Psoas muscle (tissue), 8 donors: ENCODE measurements at regions of chr2 and their contacts with region 1.

Region 1: DNA sequence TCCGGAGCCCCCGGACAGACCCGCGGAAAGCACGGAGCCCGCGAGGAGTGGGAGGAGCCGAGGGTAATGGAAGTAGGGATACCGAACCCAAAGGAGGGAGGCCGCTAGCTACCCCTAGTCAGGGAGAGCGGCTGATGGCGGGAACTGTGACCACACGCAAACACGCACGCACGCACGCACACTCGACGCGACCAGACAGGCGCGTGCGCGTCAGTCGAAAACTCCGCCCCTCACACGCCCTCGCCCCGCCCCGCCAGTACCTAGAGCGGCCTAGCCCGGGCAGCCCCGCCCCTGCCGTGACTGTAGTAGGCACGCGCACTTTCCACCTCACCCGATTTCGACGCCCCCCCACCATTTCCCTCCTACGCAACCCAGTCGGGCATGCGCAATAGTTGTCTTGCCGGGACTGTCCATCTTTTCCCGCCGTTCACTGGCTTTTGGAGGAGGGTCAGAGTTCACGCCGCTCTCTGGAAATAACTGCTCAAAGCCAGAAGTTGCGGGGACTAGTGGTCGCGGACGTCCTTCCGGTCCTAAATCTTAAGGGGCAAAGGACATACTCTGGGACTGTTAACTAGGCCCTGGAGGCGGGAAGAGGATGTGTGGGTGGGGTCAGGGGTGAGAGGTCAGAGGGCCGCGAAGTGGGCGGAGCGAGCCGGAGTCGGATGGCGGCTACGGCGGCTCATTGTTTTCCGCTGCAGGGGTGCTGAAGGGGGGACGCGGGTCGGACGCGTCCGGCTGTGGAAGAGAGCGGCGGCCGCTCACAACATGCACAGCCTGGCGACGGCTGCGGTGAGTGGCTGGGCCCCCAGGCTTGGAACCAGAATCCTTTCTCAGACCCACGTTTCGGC is at the starts of genes CNOT9 and USP37:
- DNase-seq: peak; percentile 100
- ATAC-seq: peak; percentile 94 to 97 (median 95)
- H3K4me3 ChIP-seq: peak within 1 kb of the TSS; percentile 76
- H3K27ac ChIP-seq: peak within 1 kb of the TSS; percentile 92
- H3K4me1 ChIP-seq: peaks cover 33% of the 10 kb centered on the region
- H3K27me3 ChIP-seq: no peaks in the 10 kb centered on the region
- CTCF ChIP-seq: no peak
- total RNA-seq, gene CNOT9: 15.9 to 22.9 (median 17.2) TPM
- total RNA-seq, gene USP37: 5.9 to 10.0 (median 7.2) TPM

Region 2: DNA sequence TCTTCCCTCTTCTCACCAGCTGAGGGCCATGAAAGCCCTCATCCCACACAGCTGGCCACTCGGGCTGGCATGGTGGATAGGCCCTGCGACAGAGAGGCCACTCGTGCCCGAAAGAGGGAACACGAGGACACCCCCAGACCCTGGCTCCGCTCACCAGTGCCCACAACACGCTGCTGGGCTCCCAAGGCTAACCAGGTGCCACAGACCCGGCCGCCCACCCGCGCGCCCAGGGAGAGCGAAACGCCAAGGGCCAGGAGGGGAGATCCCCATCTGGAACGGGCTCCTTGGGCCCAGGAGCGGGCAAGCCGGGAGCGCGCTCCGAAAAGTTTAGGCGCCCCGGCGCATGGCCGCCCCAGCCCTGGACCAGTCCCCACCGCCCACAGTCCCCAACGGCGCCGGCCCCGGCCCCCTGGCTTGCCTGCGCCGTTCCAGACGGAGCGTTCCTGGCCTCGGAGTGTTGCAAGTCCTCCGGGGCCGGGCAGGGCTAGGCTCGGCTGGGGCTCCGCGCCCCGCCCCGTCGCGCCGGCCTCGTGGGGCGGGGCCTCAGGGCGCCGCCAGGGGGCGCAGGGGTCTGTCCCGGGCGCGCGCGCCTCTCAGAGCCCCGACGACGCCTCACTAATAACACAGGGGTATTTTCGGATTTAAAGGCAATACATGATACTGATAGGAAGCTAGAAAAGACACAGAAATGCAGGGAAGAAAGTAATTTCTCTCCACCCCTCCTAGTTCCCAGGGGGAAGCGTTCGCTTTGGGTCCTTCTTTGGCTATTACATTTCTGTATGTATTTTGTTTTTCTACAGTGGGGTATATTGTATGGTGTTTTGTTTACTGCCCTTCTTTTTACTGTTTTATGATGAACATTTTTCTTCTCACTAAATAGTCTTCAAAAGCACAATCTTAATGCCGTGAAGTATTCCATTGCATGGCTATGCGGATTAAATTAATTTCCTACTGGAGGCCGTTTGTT is 276.1 kb before region 1 on chr2 and contains the start of gene TMBIM1:
- intact Hi-C with region 1: loop called in 1 of 2 experiments (anchors 10 kb)
- DNase-seq: peak; percentile 88 to 92
- ATAC-seq: peak; percentile 88 to 95 (median 93)
- H3K4me3 ChIP-seq: peak within 1 kb of the TSS; percentile 93
- H3K27ac ChIP-seq: peak within 1 kb of the TSS; percentile 96
- H3K4me1 ChIP-seq: peaks cover 39% of the 10 kb centered on the region
- H3K27me3 ChIP-seq: no peaks in the 10 kb centered on the region
- CTCF ChIP-seq: peak; percentile 96
- total RNA-seq, gene TMBIM1: 152 to 197 (median 157) TPM

Region 3: DNA sequence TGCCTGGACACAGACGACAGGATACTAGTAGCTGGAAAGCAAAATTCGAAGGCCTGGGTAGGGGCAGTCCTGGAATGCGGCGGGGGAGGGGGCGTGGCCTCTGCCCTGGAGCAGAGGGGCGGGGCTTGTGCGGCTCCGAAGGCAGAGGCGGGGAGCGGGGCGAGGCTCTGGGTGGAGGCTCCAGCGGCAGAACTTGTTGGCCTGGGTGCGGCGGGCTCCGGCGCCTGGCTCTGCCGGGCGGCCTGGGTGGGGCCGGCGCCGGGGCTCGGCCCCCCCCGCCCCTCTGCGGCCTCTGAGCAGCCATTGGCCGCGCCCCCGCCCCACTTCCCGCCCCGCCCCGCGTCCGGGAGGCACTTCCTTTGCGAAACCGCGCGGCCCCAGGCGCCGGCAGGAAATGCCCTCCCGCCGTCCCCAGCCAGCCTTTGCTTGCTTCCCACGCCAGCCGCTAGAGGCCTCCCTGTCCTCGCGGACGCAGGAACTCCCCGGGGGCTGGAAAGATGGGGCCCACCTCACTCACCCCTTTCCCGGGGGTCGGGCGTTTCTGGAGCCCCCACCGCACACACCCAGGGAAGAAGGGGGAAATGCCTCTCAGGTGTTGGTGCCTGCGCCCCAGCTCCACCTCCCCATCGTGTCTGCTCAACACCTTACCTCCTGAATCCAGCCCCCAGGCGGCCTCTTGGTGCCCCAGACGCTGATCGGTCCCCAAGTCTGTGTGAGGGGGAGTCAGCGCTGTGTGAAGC is 162.0 kb before region 1 on chr2:
- intact Hi-C with region 1: loop called (anchors 2 to 5 kb)
- DNase-seq: peak; percentile 98 to 99
- ATAC-seq: peak; percentile 86 to 89 (median 88)
- H3K4me3 ChIP-seq: peak overlapping the region; percentile 60
- H3K27ac ChIP-seq: peak overlapping the region; percentile 74
- H3K4me1 ChIP-seq: peaks cover 26% of the 10 kb centered on the region
- H3K27me3 ChIP-seq: no peaks in the 10 kb centered on the region
- CTCF ChIP-seq: peak; percentile 71

Region 4: GRCh38 chr2:218607436-218608115 is 39.2 kb after region 1 on chr2 and contains the start of gene PLCD4:
- intact Hi-C with region 1: loop called in 1 of 2 experiments (anchors 5 kb)
- DNase-seq: peak; percentile 38 to 75
- ATAC-seq: peak; percentile 81 to 89 (median 86)
- H3K4me3 ChIP-seq: peak within 1 kb of the TSS; percentile 70
- H3K27ac ChIP-seq: peak within 1 kb of the TSS; percentile 75
- H3K4me1 ChIP-seq: peaks cover 51% of the 10 kb centered on the region
- H3K27me3 ChIP-seq: no peaks in the 10 kb centered on the region
- CTCF ChIP-seq: no peak
- total RNA-seq, gene PLCD4: 20.3 to 85.2 (median 43.0) TPM